Thyroid gland (tissue), 4 donors: ENCODE measurements at regions of chr1 and their contacts with region 1.

Region 1: DNA sequence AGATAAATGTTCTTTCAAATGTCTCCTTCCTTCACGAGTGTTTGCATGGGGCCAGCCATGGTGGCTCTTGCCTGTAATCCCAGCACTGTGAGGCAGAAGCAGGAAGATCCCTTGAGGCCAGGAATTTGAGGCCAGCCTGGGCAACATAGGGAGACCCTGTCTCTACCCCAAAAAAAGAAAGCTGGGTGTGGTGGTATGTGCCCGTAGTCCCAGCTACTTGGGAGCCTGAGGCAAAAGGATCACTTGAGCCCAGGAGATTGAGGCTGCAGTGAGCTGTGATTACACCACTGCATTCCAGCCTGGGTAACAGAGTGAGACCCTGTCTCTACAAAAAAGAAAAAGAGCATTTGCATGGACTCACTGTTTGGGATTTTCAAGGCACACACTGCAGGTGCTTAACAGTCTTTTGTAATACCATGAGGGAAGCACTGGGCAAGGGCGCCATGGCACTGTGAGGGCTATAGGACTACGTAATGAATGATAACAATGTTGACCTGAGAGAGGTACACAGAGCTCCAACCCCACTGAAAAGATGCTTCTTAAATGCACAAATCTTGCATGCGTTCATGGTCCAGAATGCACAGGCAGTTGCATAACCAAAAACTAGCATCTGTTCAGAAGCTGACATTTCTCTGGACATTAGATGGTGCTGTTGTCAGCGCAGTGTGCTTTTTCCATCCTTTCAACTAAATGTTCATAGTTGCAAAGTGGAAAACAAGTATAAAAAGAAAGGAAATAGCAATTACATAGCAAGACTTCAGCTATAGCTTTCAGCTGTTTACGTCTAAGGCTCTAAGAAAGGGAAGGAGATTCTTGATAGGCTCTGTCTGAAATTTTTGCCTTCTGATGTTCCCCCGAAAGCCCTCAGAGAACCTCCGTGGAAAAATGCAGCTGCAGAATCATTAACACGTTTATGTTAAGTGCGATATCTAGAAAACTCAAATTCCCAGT is 7.8 kb upstream of the TARBP1 start:
- DNase-seq: peak; percentile 21 to 37
- H3K4me3 ChIP-seq: no peak overlapping the region
- H3K27ac ChIP-seq: no peak overlapping the region
- H3K4me1 ChIP-seq: peaks cover 4 to 6% of the 10 kb centered on the region in 2 donors
- H3K27me3 ChIP-seq: no peaks in the 10 kb centered on the region
- CTCF ChIP-seq: peak in 4 of 6 experiments; percentile 51 to 75 (median 61)
- POLR2A ChIP-seq: no peak

Region 2: GRCh38 chr1:234887016-234887900 is 400.5 kb after region 1 on chr1:
- intact Hi-C with region 1: no loop called
- DNase-seq: no peak
- H3K4me3 ChIP-seq: no peak overlapping the region
- H3K27ac ChIP-seq: peak overlapping the region in 1 of 3 donors; percentile 45
- H3K4me1 ChIP-seq: peaks cover 0 to 35% of the 10 kb centered on the region in 2 donors
- H3K27me3 ChIP-seq: no peaks in the 10 kb centered on the region
- CTCF ChIP-seq: no peak
- POLR2A ChIP-seq: no peak

Region 3: DNA sequence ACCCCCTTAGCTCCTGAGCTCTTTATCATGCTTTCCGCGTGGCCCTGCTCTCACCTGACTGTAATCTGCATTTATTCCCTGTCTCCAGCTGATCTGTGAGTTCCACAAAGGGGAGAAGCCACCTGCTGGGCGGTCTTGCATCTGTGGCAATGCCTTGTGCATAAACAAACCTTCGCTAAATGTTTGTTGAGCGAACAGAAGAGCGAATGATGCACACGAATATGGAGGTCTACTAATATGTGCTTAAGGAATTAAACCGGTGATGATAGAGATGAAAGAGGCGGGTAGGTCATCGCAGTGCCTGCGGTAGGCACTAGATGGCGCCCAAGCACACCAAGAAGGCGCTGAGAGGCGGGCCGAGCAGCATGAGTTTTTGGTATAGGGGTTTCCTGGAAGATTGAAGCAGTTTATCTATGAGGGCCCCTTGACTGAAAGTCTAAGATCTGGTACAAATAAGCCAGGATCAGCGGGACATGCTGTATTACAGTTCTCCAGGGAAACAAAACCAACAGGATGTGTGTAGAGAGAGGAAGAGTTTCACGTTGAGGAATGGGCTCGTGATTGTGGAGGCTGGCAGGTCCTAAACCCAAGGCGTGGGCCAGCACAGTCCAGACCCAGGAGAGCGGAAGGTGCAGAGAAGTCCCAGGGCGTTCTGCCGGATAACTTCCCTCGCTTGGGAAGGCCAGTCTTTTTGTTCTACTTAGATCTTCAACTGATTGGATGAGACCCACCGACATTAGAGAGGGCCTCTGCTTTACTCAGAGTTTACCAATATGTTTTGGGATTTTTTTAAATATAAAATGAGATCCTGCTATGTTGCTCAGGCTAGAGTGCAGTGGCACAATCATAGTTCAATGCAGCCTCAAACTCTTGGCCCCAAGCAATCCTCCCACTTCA is 607.2 kb after region 1 on chr1:
- intact Hi-C with region 1: loop called (anchors 5 kb)
- DNase-seq: peak; percentile 73 to 80
- H3K4me3 ChIP-seq: no peak overlapping the region
- H3K27ac ChIP-seq: no peak overlapping the region
- H3K4me1 ChIP-seq: peaks cover 10 to 18% of the 10 kb centered on the region in 2 donors
- H3K27me3 ChIP-seq: no peaks in the 10 kb centered on the region
- CTCF ChIP-seq: peak; percentile 60 to 89 (median 76)
- POLR2A ChIP-seq: no peak